Vagina (tissue), 2 donors: ENCODE measurements at regions of chr10 and their contacts with region 1.

Region 1: DNA sequence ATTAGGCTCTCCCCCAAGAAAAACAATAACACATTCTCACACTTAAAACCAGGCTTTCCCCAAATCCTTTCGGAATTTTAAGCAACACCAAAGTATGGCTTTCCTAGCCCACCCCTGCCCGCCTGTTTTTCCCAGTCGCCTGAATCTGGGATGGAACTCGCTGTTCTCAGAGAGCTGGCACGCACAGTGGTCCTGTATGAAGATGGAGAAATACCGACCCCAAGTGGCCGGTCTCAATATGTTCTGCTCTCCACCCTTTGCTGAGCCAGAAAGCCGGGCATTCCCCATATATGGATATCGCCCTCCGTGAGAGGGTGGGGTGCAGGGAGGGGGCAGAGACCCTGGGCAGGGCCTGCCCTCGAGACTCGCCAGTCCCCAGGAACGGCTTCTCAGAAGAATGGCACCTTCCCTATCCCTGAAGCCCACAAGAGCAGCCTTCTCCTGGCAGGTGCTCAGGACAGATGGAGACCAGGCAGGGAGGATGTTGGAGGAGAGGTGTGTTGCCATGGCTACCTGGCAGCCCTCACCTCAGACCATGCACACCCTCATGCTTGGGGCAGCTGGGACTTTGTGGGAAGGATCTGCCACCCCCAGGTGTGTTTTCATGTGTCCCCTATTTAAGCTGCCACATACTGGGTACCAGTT is 3.4 kb downstream of the TACR2 start:
- DNase-seq: no peak
- H3K4me3 ChIP-seq: peak overlapping the region in 1 of 2 donors; percentile 1
- H3K27ac ChIP-seq: peak overlapping the region; percentile 57
- H3K4me1 ChIP-seq: peaks cover 13% of the 10 kb centered on the region
- H3K27me3 ChIP-seq: no peaks in the 10 kb centered on the region
- CTCF ChIP-seq: peak; percentile 48 to 76 (median 59)
- POLR2A ChIP-seq: no peak

Region 2: GRCh38 chr10:69004821-69005220 is 408.5 kb before region 1 on chr10:
- intact Hi-C with region 1: loop called (anchors 10 kb)
- DNase-seq: no peak
- H3K4me3 ChIP-seq: no peak overlapping the region
- H3K27ac ChIP-seq: no peak overlapping the region
- H3K4me1 ChIP-seq: no peaks in the 10 kb centered on the region
- H3K27me3 ChIP-seq: no peaks in the 10 kb centered on the region
- CTCF ChIP-seq: peak; percentile 11 to 33 (median 30)
- POLR2A ChIP-seq: no peak

Region 3: DNA sequence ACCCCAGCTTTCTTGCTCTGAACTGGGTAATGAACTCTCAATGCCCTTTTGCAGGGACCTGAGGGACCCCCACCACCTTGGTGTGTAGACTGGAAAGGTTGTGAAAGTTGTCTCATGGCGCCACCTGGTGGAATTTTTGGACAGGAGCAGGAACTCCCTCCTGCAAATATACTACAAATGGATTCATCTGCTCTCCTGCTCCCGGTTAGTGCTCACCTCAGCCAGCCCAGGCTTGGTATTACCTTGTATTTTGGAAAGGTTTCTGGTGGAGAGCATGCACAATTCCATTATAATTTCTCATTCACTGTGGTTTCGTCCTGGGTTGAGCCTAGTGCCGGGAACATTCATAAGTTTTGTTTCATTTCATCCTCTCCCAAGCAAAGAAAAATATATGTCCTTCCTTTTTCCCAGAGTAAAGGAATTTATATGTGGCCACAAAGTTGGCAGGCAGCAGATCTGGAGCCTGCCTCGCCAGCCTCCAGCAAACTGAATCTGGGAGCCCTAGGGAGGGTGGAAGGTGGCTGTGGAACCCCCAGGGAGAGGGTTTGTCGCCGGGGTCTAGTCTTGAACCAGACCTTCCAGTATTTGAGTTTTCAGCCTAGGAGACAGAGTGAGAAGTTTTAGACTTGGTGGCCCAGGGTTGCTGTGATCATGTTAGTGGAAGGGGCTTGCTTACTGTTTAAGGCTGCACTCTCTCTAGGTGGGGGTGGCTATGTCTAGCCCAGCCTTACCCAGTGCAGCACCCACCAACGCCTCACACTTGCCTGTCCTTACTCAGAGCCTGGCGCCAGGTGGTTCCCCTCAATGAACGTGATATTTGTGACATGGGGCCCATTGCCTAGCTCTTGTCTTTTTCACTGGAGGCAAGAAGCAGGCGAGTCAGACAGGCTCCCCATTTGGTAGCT is 226.2 kb after region 1 on chr10:
- intact Hi-C with region 1: no loop called
- DNase-seq: no peak
- H3K4me3 ChIP-seq: no peak overlapping the region
- H3K27ac ChIP-seq: no peak overlapping the region
- H3K4me1 ChIP-seq: peaks cover 9% of the 10 kb centered on the region
- H3K27me3 ChIP-seq: no peaks in the 10 kb centered on the region
- CTCF ChIP-seq: peak; percentile 58 to 86 (median 83)
- POLR2A ChIP-seq: no peak